ENCODE measurements at regions of chr2 and their contacts with region 1.

Region 1: DNA sequence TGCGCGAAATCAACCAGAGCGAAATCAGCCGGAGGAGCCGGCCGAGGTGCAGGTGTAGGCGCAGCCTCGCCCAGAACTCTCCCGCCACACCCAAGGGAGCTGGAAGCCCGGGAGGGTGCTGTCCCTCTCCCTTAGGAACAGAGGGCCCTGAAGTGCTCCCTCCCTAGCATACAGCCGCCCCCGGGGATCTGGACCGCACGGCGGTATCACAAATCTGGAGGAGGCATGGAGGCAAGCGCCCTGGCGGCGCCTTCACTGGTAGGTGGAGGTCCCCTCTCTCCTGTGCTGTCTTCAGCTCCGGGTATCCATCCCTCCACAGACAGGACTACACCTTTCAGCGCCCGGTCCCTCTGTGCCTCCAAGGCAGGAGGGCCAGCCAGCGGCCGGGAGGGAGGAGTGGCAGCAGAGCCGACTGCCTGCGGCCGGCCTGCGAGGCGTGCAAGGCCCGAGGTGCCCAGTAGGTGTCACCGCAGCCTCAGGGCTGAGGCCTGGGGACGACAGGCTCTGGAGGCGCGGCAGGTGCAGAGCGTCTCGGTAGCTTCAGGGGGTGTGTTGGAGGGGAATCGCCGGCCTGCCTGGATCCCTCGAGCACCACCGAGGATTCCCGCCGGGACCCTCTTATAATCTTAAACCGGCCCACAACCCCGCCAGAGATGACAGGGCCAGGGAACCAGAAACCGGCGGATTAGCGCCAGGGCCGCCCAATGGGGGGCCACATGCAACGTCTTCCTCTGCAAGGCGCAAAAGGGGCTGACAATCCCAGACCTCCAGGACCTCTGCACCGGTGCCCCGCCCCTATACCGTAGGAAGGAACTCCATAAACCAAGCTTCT is 2.8 kb downstream of the IHH start:
- DNase-seq: no peak
- H3K4me3 ChIP-seq: peak overlapping the region; percentile 13; the same call in 1 of the 2 replicates
- H3K27ac ChIP-seq: no peak overlapping the region
- H3K27me3 ChIP-seq: peaks cover 78% of the 10 kb centered on the region
- CTCF ChIP-seq: peak; percentile 89

Region 2: GRCh38 chr2:218312267-218312756 is 745.6 kb before region 1 on chr2:
- CTCF ChIA-PET with region 1: no interaction called
- POLR2A ChIA-PET with region 1: no interaction called
- DNase-seq: no peak
- H3K4me3 ChIP-seq: no peak overlapping the region
- H3K27ac ChIP-seq: no peak overlapping the region
- H3K27me3 ChIP-seq: peaks cover under 1% of the 10 kb centered on the region
- CTCF ChIP-seq: no peak

Region 3: DNA sequence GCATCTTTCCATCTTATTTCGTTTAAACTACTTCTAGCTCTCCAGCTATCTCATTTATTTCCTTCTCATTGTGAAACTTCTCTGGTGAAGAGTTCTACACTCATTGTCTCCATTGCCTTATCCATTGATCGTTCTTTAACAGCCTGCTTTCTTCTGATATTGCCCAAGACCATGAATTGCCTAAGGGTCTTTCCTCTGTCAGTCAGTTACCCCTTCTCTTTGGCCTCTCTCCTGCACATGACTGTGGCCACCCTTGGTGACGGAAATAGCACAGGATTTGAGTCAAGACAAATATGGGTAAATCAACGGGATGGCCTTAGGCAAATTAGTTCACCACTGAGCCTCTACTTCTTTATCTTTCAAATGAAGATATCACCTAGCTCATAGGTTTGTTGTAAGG is 76.1 kb after region 1 on chr2:
- CTCF ChIA-PET with region 1: interaction called, 10 read pairs
- POLR2A ChIA-PET with region 1: no interaction called
- DNase-seq: no peak
- H3K4me3 ChIP-seq: no peak overlapping the region
- H3K27ac ChIP-seq: no peak overlapping the region
- H3K27me3 ChIP-seq: no peaks in the 10 kb centered on the region
- CTCF ChIP-seq: no peak

Region 4: DNA sequence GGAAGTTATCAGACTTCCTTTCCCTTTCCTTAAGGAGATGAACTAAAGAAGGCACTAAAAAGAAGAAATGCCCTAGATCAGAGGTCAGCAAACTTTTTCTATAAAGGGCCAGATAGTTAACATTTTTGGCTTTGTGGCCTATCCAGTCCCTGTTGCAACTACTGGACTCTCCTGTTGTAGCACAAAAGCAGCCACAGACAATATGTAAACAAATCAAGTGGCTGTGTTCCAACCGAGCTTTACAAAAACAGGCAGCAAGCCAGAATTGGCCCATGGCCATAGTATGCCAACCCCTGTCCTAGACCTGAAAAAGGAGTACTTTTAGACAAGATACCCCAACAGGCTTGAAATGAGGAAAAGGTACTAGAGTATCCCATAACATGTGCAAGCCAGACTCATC is 91.7 kb after region 1 on chr2:
- CTCF ChIA-PET with region 1: interaction called, 180 read pairs
- POLR2A ChIA-PET with region 1: no interaction called
- DNase-seq: no peak
- H3K4me3 ChIP-seq: no peak overlapping the region
- H3K27ac ChIP-seq: no peak overlapping the region
- H3K27me3 ChIP-seq: no peaks in the 10 kb centered on the region
- CTCF ChIP-seq: no peak

Measured in AG04450 (cell line).